Right cardiac atrium (tissue), 5 donors: ENCODE measurements at regions of chr7 and their contacts with region 1.

Region 1: GRCh38 chr7:100563809-100564400 is 9.8 kb downstream of the SAP25 start:
- DNase-seq: peak; percentile 80 to 93 (median 91)
- ATAC-seq: peak; percentile 45 to 68
- H3K4me3 ChIP-seq: no peak overlapping the region
- H3K27ac ChIP-seq: no peak overlapping the region
- H3K4me1 ChIP-seq: no peaks in the 10 kb centered on the region
- H3K27me3 ChIP-seq: no peaks in the 10 kb centered on the region

Region 2: GRCh38 chr7:100680167-100680575 is 116.3 kb after region 1 on chr7:
- intact Hi-C with region 1: loop called in 1 of 4 experiments (anchors 10 kb)
- DNase-seq: peak; percentile 71 to 82 (median 72)
- ATAC-seq: peak; percentile 41 to 51
- H3K4me3 ChIP-seq: no peak overlapping the region
- H3K27ac ChIP-seq: peak overlapping the region; percentile 21
- H3K4me1 ChIP-seq: peaks cover 2% of the 10 kb centered on the region
- H3K27me3 ChIP-seq: no peaks in the 10 kb centered on the region

Region 3: GRCh38 chr7:100691676-100692577 is 128.0 kb after region 1 on chr7:
- intact Hi-C with region 1: loop called in 3 of 4 experiments (anchors 5 to 10 kb)
- DNase-seq: peak; percentile 77 to 92 (median 92)
- ATAC-seq: peak; percentile 82 to 84
- H3K4me3 ChIP-seq: no peak overlapping the region
- H3K27ac ChIP-seq: peak overlapping the region; percentile 1
- H3K4me1 ChIP-seq: peaks cover 6% of the 10 kb centered on the region
- H3K27me3 ChIP-seq: no peaks in the 10 kb centered on the region